Cardiac septum (tissue), 1 donor: ENCODE measurements at regions of chr1 and their contacts with region 1.

Region 1: GRCh38 chr1:156659994-156660751 is 17.0 kb downstream of the NES start:
- DNase-seq: peak; percentile 97

Region 2: DNA sequence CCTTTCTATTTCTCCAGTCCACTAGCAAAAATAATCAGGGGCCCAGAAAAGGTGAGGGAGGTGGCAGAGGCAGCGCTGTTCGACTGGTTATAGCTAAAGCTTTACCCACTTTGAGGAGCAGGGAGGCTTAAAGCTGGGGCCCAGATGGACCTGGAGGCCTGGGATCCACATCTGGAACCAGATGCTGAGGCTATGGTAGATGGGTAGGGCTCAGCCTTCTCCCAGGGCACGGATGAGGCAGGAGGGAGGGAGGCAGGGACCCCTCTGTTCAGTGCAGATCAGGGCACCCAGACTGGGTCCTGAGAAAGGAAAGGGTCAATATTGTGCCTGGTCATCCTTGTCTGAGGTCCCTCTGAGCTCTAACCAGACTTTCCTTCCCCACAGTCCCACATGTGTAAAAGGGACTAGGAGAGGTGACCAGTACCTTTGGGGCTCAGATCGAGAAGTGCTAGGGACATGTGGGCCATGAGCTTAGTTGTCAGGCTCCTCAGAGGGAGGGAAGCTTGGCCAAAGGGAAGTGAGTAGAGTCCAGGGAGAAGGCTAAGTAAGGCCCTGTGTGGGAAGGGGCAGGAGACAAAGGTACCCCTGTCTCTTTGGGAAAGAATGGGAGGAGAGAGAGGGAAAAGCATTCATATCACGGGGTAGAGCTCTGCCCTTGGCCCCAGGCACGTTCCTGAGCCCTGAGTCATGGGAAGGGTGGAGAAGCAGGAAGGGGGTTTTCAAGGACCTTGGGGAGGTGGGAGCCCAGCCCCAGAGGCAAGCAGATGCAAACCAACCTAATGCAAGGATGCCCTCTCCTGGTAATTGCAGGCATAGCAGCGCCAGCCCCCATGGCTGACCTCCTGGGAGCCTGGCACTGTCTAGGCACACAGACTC is 530.2 kb before region 1 on chr1:
- intact Hi-C with region 1: loop called (anchors 10 kb)
- DNase-seq: peak; percentile 88

Region 3: DNA sequence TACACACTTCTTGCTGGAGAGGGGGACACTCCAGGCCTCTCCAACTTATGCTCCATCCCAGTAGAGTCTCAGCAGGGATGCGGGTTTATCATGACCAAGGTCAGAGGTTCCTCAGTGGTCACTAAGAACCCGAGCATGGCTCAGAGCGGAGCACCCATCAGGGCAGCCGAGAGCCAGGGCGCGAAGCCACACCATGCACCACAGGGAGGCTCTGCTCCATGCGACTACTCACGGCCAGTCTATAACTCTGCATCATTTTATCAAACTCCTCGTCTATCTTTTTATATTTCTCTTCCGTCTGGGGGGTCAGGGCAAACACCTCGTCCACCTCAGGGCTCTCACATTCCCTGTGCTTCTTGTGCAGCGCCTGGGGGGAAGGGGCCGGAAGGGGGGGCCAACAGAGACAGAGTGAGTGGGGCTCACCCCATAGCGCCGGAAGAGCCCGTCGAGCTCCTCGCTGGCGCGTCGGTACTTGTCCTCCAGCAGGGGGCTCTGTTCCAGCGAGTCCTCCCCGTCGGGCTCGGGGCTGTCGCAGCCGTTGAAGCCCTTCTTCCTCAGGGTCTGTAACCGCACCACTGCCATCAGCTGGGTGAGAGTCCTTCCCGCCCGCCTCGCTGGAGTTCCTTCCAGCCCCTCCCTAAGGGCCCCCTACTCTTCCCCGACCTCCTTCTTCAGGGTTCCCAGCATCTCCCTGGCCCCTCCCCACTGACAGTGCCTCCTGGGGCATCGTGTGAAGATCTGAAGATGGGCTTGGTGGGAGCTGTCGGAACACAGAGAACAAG is 179.6 kb before region 1 on chr1:
- intact Hi-C with region 1: no loop called
- DNase-seq: peak; percentile 85

Region 4: DNA sequence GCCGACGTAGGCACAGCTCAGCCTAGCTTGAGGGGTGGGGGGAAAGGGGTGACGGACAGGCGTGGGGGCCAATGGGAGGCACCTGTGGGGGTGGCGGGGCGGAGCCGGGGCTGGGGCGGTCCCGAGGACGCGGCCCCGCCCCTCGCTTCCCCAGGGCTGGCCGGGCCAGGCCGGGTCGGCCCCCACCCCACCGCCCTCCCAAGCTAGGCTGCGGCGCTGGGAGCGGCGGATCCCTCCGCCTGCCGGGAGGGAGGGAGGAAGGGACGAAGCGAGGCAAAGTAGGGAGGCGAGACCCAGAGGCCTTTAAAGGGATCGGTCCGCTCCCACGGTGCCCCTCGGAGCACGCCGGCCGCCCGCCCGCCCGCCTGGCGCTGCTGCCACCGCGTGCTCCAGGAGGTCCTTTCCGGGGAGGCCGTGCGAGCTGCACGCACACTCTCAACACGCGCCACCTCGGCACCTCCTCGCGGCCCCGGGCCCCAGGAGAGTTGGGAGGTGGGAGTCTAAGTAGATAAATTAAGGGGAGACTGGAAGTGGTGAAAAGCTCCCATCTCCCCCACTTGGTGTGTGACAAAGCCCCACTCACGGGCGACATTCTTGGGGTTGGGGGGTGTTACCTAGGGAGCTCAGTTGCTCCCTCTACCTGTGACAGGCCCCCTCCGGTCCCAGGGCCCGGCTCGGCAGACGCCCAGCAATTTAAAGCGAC is 159.2 kb before region 1 on chr1:
- intact Hi-C with region 1: loop called (anchors 2 kb)
- DNase-seq: peak; percentile 98

Region 5: DNA sequence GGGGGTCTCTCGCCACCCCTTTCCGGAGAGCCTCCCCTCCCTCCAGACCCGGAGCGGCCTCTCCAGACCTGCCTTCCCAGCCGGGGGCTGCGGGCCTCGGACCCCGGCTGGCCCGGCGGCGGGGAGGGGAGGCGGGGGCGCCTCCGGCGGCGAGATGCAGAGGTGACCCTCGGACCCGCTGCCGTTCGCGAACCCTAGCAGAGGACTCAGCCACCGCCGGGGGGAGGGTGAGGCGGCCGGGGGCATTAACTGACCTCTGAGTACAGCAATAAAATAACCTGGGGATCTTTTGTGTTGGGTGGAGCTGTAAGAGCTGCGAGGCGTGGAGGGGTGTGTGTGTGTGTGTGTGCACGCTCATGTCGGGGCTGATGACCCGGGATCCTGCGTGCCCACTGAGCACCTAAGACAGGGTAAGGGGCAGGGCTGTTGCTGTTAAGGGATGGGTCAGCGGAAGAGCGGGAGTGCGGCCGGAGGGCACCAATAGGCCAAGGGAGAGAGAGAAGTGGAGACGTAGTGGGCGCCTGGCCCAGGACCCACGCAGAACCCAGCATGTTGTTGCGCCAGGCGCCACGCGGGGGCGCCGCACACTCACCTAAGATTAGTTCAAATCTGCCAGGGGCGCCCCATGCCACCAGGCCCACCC is 34.6 kb before region 1 on chr1:
- intact Hi-C with region 1: loop called (anchors 1 kb)
- DNase-seq: peak; percentile 75

Region 6: DNA sequence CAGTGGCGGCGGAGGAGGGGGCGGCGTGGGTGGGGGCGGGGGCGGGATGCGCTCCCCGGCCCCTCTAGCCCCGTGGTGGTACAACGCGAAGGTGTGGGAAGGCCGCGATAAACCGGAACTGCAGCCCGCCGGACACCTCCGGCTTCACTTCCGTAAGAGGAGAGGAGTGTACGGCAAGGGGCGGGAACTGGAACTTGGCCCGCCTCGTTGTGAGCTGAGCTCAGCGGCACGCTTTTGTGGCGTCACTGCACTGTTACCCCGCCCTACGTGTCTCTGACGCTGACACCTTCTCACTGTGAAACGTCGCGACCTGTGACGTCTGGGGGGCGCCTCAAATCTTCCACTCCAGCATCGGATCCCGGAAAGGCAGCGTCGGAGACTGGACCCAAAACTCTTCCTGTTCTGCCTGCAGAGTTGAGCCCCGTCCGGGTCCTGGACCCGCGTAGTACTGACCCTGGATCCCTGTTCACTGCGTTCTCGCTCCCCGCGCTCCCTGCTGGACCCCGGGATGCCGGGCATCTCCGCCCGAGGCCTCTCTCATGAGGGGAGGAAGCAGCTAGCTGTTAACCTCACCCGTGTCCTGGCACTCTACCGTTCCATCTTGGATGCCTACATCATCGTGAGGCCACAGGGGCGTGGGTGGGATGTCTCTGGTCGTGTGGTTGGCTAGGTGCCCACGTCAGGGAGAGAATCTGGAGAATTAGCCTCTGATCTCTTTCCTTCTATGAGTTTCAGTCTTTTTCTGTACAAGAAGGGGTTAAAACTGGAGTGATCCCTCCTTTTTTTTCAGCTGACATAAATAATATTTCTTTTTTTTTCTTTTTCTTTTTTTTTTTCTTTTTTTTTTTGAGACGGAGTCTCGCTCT is 68.7 kb after region 1 on chr1 and contains the start of gene ISG20L2:
- intact Hi-C with region 1: loop called (anchors 1 kb)
- DNase-seq: peak; percentile 98
- total RNA-seq, gene ISG20L2: 12.4 TPM